ENCODE measurements at regions of chr4 and their contacts with region 1.

Region 1: DNA sequence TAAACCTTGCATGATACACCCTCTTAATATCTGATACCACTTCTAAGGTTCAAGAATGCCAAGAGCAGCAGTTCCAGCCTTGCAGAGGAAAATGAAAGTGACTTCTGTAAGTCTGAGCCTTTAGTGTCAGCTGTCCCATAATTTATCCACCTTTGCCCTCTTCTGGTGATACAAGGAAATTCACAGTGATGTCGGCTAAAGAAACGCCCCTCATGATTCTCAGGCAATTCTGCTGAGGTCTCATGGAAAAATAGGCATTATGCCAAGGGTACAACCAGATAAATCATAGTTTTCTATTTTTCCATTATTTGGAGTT is 172.2 kb upstream of the CXCL13 start:
- DNase-seq: no peak
- ATAC-seq: peak; percentile 79
- H3K4me3 Mint-ChIP-seq: no peak overlapping the region
- H3K27ac Mint-ChIP-seq: no peak overlapping the region
- H3K4me1 Mint-ChIP-seq: peaks cover 4% of the 10 kb centered on the region
- H3K27me3 Mint-ChIP-seq: peaks cover 4% of the 10 kb centered on the region
- CTCF ChIP-seq: no peak

Region 2: GRCh38 chr4:77376788-77377460 is 56.5 kb before region 1 on chr4:
- CTCF ChIA-PET with region 1: interaction called, 28 read pairs
- POLR2A ChIA-PET with region 1: no interaction called
- DNase-seq: peak; percentile 35
- ATAC-seq: peak; percentile 78
- H3K4me3 Mint-ChIP-seq: no peak overlapping the region
- H3K27ac Mint-ChIP-seq: no peak overlapping the region
- H3K4me1 Mint-ChIP-seq: peaks cover 20% of the 10 kb centered on the region
- H3K27me3 Mint-ChIP-seq: no peaks in the 10 kb centered on the region
- CTCF ChIP-seq: no peak

Region 3: GRCh38 chr4:77385124-77385969 is 48.0 kb before region 1 on chr4:
- CTCF ChIA-PET with region 1: interaction called, 62 read pairs
- POLR2A ChIA-PET with region 1: no interaction called
- DNase-seq: peak; percentile 72
- ATAC-seq: peak; percentile 87
- H3K4me3 Mint-ChIP-seq: no peak overlapping the region
- H3K27ac Mint-ChIP-seq: no peak overlapping the region
- H3K4me1 Mint-ChIP-seq: peaks cover 15% of the 10 kb centered on the region
- H3K27me3 Mint-ChIP-seq: no peaks in the 10 kb centered on the region
- CTCF ChIP-seq: peak; percentile 83

Region 4: GRCh38 chr4:77395481-77395880 is 37.9 kb before region 1 on chr4:
- CTCF ChIA-PET with region 1: interaction called, 14 read pairs
- POLR2A ChIA-PET with region 1: no interaction called
- DNase-seq: no peak
- ATAC-seq: no peak
- H3K4me3 Mint-ChIP-seq: no peak overlapping the region
- H3K27ac Mint-ChIP-seq: no peak overlapping the region
- H3K4me1 Mint-ChIP-seq: peaks cover 3% of the 10 kb centered on the region; the same call in 1 of the 2 replicates
- H3K27me3 Mint-ChIP-seq: no peaks in the 10 kb centered on the region
- CTCF ChIP-seq: no peak

Region 5: DNA sequence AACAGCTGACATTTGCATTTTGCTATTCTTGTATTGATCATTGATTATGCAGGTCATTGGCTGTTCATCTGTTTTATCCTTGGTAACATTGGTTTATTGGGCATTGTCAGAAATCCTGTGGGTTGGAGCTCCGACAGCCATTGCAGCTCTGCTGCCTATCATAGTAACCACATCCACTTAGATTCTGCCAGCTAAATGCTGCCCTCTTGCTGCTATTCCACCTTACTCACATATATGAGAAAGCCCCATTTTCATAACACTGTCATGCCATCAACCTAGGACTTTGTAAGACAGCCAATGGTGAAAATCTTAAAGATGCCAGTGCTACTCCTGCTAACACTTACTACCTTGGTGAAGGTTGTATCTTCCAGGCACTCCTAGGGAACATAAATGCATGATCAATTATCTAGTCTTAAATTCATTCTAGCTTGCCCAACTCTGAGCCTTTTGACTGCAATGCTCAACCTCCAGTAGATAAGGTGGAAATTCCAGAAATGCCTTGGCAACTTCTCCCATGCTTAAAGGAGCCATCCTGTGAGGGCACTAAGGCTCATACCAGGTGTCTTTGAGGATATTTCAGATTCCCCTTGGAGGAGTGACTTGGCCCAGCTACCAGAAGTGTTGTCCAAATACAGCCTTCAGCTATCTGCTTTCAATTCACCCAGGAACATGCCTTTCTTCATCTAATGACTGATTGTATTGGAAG is 14.9 kb before region 1 on chr4:
- CTCF ChIA-PET with region 1: interaction called, 32 read pairs
- POLR2A ChIA-PET with region 1: no interaction called
- DNase-seq: no peak
- ATAC-seq: peak; percentile 83
- H3K4me3 Mint-ChIP-seq: no peak overlapping the region
- H3K27ac Mint-ChIP-seq: no peak overlapping the region
- H3K4me1 Mint-ChIP-seq: no peaks in the 10 kb centered on the region
- H3K27me3 Mint-ChIP-seq: no peaks in the 10 kb centered on the region
- CTCF ChIP-seq: no peak

Region 6: DNA sequence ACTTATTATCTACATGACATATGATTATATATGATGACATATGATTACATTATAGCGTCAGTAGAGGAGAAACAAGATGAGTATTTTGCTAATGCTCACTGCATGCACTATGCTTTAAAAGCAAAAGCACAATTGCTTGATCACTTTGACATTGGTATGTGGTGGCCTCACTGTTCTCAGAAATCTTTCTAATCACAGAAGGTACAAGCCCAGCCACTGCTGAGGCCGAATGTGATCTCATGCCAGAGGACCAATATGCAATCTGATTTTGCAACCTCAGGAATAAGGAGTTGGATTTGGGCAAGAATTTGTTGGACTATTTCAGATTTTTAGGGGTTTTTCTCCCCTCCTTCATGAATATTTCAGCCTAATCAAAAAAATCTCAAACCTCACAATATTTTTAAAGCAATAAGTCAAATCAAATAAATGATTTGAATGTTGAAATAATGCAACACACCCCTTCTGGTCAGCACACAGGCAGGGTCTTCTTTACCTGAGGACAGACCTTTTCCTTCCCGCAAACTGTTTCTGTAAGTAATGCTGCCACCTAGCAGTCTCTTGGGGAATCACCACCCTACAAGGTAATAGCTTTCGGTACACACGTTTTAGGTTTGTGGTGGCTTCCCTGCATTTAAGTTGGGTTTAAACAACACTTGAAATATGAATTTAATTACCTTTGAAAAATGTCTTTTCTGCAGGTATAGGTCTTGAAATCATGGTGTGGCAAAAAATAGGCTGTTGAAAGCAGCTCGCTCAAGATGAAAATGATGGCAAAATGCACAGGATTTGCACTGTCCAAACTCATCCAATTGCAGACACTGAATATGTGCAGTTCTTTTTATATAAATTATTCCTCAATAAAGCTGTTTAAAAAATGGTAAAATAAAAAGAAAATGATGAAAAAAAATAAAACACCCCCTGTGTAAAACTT is 167.4 kb after region 1 on chr4:
- CTCF ChIA-PET with region 1: interaction called, 13 read pairs
- POLR2A ChIA-PET with region 1: no interaction called
- DNase-seq: peak; percentile 29
- ATAC-seq: peak; percentile 88
- H3K4me3 Mint-ChIP-seq: no peak overlapping the region
- H3K27ac Mint-ChIP-seq: no peak overlapping the region
- H3K4me1 Mint-ChIP-seq: no peaks in the 10 kb centered on the region
- H3K27me3 Mint-ChIP-seq: no peaks in the 10 kb centered on the region
- CTCF ChIP-seq: peak; percentile 62; the same call in 1 of the 2 replicates

Region 7: GRCh38 chr4:77862478-77863216 is 429.3 kb after region 1 on chr4 and contains the start of gene MRPL1:
- CTCF ChIA-PET with region 1: no interaction called
- POLR2A ChIA-PET with region 1: no interaction called
- DNase-seq: peak; percentile 83
- ATAC-seq: peak; percentile 92
- H3K4me3 Mint-ChIP-seq: peak within 1 kb of the TSS; percentile 94
- H3K27ac Mint-ChIP-seq: peak within 1 kb of the TSS; percentile 99
- H3K4me1 Mint-ChIP-seq: peaks cover 20% of the 10 kb centered on the region
- H3K27me3 Mint-ChIP-seq: no peaks in the 10 kb centered on the region
- CTCF ChIP-seq: no peak
- total RNA-seq, gene MRPL1: 24.3 to 27.9 TPM (median 25.7 TPM) in 3 replicates